SK-N-SH (cell line): ENCODE measurements at regions of chr9 and their contacts with region 1.

Region 1: GRCh38 chr9:77896938-77897667 is 134.5 kb downstream of the GNAQ start:
- DNase-seq: peak; percentile 65
- H3K4me3 ChIP-seq: no peak overlapping the region
- H3K27ac ChIP-seq: peak overlapping the region; percentile 1 to 83; a peak in 3 of 4 replicates
- H3K4me1 ChIP-seq: peaks cover 24 to 27% of the 10 kb centered on the region in 2 experiments; a peak in 3 of 4 replicates
- H3K27me3 ChIP-seq: no peaks in the 10 kb centered on the region
- CTCF ChIP-seq: peak; percentile 48
- EP300 ChIP-seq: peak in 1 of 2 experiments; percentile 91; a peak in 2 of 4 replicates
- RAD21 ChIP-seq: peak; percentile 55

Region 2: DNA sequence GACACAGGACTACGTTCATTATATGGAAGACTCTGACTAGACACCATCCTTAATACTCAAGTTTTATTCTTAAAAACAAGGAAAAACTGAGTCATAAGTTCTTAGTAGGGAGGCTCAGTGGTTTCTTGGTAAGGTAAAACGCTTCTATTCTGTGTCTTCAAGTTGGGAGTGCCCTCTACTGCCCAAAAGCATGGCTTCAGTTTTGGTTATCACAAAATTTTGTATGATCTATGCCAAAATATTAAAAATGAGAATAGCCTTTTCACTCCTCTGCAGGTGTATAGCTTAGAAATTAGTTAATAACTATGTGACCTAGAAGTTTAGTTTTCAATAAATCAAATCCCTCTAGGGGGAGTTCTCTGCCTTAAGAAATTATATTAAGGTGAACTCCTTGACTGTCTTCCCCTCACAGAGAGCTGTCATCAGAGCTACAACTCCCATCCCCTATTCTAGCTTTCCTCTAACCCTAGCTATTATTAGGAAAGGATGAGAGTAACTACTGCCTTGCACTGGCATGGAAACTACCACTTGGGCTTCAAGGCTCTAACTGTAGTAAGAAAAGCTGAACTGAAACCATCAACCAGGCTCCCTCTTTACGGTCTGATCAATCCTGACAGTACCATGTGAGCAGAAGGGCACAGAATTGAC is 55.2 kb before region 1 on chr9:
- CTCF ChIA-PET with region 1: interaction called, 14 read pairs
- POLR2A ChIA-PET with region 1: no interaction called
- DNase-seq: no peak
- H3K4me3 ChIP-seq: no peak overlapping the region
- H3K27ac ChIP-seq: peak overlapping the region in 1 of 2 experiments; percentile 50; a peak in 1 of 4 replicates
- H3K4me1 ChIP-seq: peaks cover 17 to 42% of the 10 kb centered on the region in 2 experiments
- H3K27me3 ChIP-seq: no peaks in the 10 kb centered on the region
- CTCF ChIP-seq: peak; percentile 60
- EP300 ChIP-seq: no peak
- RAD21 ChIP-seq: peak; percentile 41

Region 3: DNA sequence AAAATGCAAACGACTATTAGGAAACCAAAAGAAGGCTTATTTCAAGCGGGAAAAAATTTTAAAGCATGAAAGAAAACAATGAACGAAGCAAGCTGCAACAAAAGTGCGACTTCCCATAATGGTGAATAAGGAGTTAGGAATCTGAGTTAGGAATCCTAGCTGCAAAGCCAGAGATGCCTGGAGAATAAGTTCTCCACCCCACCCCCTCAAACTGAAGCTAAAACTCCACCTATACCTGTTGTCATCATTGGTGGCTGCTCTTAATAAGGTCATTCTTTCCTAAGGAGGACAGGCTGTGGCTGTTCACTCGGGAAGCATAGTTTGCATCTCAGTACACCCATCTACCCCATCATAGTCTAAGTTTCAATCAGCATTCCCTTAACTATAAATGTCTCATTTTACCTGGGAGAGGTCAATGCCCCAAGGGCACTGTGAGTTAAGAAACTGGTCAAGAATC is 12.7 kb before region 1 on chr9:
- CTCF ChIA-PET with region 1: interaction called, 14 read pairs
- POLR2A ChIA-PET with region 1: no interaction called
- DNase-seq: no peak
- H3K4me3 ChIP-seq: no peak overlapping the region
- H3K27ac ChIP-seq: peak overlapping the region; percentile 14 to 56; a peak in 3 of 4 replicates
- H3K4me1 ChIP-seq: peaks cover 14 to 29% of the 10 kb centered on the region in 2 experiments; a peak in 3 of 4 replicates
- H3K27me3 ChIP-seq: no peaks in the 10 kb centered on the region
- CTCF ChIP-seq: no peak
- EP300 ChIP-seq: no peak
- RAD21 ChIP-seq: no peak

Region 4: GRCh38 chr9:77922591-77922990 is 25.5 kb after region 1 on chr9:
- CTCF ChIA-PET with region 1: interaction called, 10 read pairs
- POLR2A ChIA-PET with region 1: no interaction called
- DNase-seq: no peak
- H3K4me3 ChIP-seq: no peak overlapping the region
- H3K27ac ChIP-seq: peak overlapping the region in 1 of 2 experiments; percentile 58; a peak in 2 of 4 replicates
- H3K4me1 ChIP-seq: peaks cover 21 to 30% of the 10 kb centered on the region in 2 experiments
- H3K27me3 ChIP-seq: no peaks in the 10 kb centered on the region
- CTCF ChIP-seq: no peak
- EP300 ChIP-seq: no peak
- RAD21 ChIP-seq: no peak

Region 5: DNA sequence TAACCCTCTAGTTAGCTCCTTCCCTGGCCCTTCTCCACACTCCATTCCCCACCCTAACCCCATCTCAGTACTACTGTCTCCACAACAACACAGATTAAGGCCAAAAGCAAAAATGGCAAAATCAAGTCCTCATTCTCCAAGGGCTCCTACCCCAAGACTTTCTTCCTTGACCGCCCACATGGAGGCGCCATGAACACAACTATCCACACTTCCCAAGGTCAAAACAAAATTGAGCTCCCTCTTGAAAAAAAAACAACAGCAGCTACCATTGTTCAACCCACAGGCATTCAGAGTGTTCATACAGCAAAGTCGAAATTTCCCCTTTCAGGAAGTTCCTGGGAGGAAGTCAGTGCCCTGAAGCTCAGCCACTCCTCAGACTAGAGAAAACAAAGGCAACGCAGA is 80.1 kb after region 1 on chr9:
- CTCF ChIA-PET with region 1: interaction called, 14 read pairs
- POLR2A ChIA-PET with region 1: no interaction called
- DNase-seq: peak; percentile 25
- H3K4me3 ChIP-seq: peak overlapping the region in 1 of 2 experiments; percentile 20; a peak in 1 of 4 replicates
- H3K27ac ChIP-seq: peak overlapping the region; percentile 5 to 42; a peak in 2 of 4 replicates
- H3K4me1 ChIP-seq: peaks cover 10 to 41% of the 10 kb centered on the region in 2 experiments; a peak in 3 of 4 replicates
- H3K27me3 ChIP-seq: no peaks in the 10 kb centered on the region
- CTCF ChIP-seq: peak; percentile 76
- EP300 ChIP-seq: no peak
- RAD21 ChIP-seq: peak; percentile 77

Region 6: DNA sequence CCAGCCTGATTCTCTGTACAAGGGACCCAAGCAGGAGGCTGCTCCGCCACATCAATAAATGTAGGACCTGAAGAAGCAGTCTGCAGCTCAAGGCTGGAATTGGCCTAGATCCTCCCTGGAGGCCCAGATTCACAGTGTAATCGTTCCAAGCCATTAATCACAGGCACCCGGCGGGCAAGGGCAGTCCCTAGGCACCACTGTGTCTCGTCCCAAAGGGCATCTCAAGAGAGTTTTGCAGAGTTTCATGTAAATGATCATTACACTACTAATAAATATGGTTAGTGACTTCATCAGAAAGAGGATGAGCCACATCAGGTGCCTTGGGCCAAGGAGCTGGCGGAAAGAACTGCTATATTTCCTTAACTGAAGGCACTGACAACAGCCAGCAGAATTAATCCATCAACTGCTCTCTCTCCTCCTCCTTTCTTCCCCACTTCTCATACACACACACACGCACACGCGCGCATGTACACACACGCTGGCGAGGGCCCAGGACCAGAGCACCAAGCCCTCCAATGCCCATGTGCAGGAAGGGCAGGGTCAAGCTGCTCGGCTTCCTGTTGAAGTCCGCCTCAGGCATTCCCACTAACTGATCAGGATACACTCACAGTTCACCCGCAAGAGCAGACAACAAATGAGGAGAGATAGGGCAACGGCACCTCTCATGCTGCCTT is 100.6 kb after region 1 on chr9:
- CTCF ChIA-PET with region 1: interaction called, 10 read pairs
- POLR2A ChIA-PET with region 1: no interaction called
- DNase-seq: peak; percentile 77
- H3K4me3 ChIP-seq: no peak overlapping the region
- H3K27ac ChIP-seq: peak overlapping the region in 1 of 2 experiments; percentile 85; a peak in 3 of 4 replicates
- H3K4me1 ChIP-seq: peaks cover 22 to 33% of the 10 kb centered on the region in 2 experiments
- H3K27me3 ChIP-seq: no peaks in the 10 kb centered on the region
- CTCF ChIP-seq: no peak
- EP300 ChIP-seq: peak in 1 of 2 experiments; percentile 39; a peak in 1 of 4 replicates
- RAD21 ChIP-seq: no peak

Region 7: DNA sequence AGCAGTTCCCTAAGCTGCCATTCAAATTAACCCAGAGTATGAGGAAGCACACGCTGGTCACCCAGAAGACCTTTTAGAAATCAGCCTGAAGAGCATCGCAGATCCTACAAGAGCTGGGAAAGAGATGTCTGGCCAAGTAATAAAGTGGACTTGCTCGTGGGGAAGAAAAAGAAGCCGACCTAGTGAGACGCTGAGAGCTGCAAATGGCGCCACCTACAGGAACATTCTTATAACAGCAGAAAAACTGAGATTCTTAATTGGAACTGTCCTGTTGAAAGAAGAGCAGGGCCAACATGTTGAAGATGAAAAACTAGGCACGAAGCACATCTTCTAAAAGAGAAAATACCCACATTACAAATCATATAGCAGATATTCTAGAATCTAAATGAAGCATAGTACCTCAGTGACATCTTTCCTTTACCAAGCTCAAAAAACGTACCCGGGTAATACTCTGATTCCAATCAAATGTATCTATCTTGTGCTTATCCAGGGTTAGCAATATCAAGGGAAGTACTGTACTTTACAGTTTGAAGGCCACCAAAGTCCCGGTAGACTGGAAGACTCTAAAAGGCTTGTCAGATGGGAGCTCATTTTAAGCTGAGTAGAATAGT is 138.4 kb after region 1 on chr9:
- CTCF ChIA-PET with region 1: interaction called, 35 read pairs
- POLR2A ChIA-PET with region 1: interaction called, 5 read pairs
- DNase-seq: peak; percentile 65
- H3K4me3 ChIP-seq: peak overlapping the region in 1 of 2 experiments; percentile 14; a peak in 1 of 4 replicates
- H3K27ac ChIP-seq: peak overlapping the region in 1 of 2 experiments; percentile 36; a peak in 3 of 4 replicates
- H3K4me1 ChIP-seq: peaks cover 0 to 9% of the 10 kb centered on the region in 2 experiments; a peak in 3 of 4 replicates
- H3K27me3 ChIP-seq: no peaks in the 10 kb centered on the region
- CTCF ChIP-seq: peak; percentile 85
- EP300 ChIP-seq: no peak
- RAD21 ChIP-seq: peak; percentile 92